Caco-2 (cell line): ENCODE measurements at regions of chr5 and their contacts with region 1.

Region 1: DNA sequence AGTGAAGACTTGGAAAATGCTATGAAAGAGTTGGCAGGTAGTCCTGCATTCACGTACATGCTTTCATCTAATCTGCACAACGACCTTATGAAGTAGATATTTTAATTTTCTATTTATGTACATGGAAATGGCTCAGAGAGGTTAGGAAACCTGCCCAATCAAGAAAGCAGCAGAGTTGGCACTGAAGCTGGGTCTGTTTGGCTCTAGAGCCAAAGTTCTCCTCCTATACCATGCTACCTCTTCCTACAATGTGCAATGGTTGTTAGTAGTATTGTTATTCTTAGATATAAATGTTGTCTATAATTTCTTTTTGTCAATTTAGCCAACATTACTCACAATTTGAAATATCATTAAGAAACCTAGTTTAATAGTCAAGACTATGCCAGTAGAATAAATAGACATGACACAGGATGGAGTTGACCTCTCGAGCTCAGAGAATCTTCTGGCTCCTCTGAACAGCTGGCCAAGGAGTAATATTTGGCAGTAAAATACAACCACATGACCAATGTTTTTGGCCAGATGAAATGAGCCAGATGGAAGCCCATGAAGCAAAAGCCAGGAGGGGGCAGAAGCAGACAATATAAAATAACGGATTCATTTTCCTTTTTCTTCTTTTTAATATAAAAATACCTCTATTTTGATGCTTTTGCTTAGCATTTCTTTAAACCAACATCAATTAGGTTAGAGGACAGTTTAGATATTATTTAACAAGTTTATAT is 542.3 kb downstream of the PDE4D start:
- DNase-seq: no peak
- H3K4me3 ChIP-seq: no peak overlapping the region
- H3K4me3 Mint-ChIP-seq: no peak overlapping the region
- H3K27ac Mint-ChIP-seq: no peak overlapping the region
- H3K4me1 ChIP-seq: peaks cover 17% of the 10 kb centered on the region
- H3K4me1 Mint-ChIP-seq: peaks cover 22% of the 10 kb centered on the region
- H3K27me3 ChIP-seq: no peaks in the 10 kb centered on the region
- H3K27me3 Mint-ChIP-seq: no peaks in the 10 kb centered on the region
- CTCF ChIP-seq: no peak

Region 2: DNA sequence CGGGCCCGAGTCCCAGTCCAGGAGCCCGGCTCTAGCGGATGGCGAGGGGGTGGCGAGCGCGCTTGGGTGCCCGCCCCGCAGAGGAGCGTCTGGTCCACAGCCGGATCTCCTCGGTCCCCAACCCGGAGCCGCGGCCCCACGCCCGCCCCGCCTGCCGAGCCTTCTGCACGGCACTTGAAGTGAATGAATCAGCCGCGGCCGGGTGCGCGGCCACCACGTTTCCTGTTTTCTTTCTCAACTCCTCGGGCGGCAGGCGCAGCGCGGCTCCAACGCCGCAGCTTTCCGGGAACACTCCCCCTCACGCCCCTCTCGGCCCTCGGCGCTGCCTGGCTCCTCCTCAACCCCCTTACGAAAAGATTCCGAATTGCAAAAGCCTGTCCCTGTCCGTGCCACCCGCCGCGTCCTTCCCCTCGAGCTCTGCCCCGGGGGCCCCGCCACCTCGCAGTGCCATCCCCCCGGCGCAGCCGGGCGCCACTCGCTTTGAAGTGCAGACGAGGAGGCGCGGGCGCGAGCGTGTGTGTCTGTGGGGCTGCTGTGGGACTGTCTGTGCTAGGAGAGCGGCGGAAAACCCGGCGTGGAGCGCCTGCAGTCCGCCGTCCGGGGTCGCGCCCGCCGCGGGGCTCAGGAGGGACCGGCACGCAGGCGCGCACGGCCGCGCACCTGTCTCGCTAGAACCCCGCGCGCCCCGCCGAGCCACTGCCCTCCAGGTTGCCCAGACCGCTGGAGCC is 311.8 kb before region 1 on chr5:
- CTCF ChIA-PET with region 1: no interaction called
- POLR2A ChIA-PET with region 1: no interaction called
- intact Hi-C with region 1: loop called (anchors 10 kb)
- DNase-seq: peak; percentile 78 to 80
- H3K4me3 ChIP-seq: peak overlapping the region; percentile 95
- H3K4me3 Mint-ChIP-seq: peak overlapping the region; percentile 69
- H3K27ac Mint-ChIP-seq: peak overlapping the region; percentile 10
- H3K4me1 ChIP-seq: peaks cover 39% of the 10 kb centered on the region
- H3K4me1 Mint-ChIP-seq: peaks cover 17% of the 10 kb centered on the region
- H3K27me3 ChIP-seq: no peaks in the 10 kb centered on the region
- H3K27me3 Mint-ChIP-seq: no peaks in the 10 kb centered on the region
- CTCF ChIP-seq: no peak

Region 3: GRCh38 chr5:59218424-59219045 is 132.7 kb before region 1 on chr5:
- CTCF ChIA-PET with region 1: interaction called, 19 read pairs
- POLR2A ChIA-PET with region 1: interaction called, 3 read pairs
- intact Hi-C with region 1: loop called (anchors 1 kb)
- DNase-seq: no peak
- H3K4me3 ChIP-seq: no peak overlapping the region
- H3K4me3 Mint-ChIP-seq: no peak overlapping the region
- H3K27ac Mint-ChIP-seq: no peak overlapping the region
- H3K4me1 ChIP-seq: no peaks in the 10 kb centered on the region; the same call in 1 of the 2 replicates
- H3K4me1 Mint-ChIP-seq: peaks cover 10% of the 10 kb centered on the region
- H3K27me3 ChIP-seq: no peaks in the 10 kb centered on the region
- H3K27me3 Mint-ChIP-seq: no peaks in the 10 kb centered on the region
- CTCF ChIP-seq: peak; percentile 5 to 52

Region 4: DNA sequence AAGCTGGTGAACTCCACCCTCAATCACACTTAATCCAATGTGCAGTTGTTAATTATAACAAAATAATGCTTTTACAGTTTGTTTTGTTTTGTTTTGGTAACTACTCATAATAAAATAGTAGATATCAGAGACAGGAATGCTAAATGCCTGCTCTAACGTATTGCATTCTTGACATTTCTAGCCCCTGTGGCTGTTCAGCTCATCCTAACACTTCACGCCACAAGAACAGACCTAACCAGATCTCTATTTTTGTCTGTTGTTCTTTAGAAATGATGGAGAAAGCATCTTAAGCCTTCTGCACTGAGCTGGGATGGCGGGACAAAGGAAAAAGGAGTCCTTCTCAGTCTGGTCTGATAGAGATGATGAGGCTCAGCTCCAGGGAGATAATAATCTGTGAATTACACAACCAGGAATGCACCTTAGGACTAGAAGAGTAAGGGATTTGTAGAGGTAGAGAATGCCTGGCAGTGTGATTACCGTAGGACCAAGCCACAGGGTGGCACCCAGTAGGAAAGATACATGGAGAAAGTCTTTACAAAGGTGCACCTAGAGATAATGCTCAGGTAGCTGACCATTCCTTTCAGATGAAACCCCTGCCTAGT is 86.5 kb before region 1 on chr5:
- CTCF ChIA-PET with region 1: interaction called, 13 read pairs
- POLR2A ChIA-PET with region 1: no interaction called
- intact Hi-C with region 1: loop called (anchors 5 kb)
- DNase-seq: peak in 1 of 2 experiments; percentile 34
- H3K4me3 ChIP-seq: no peak overlapping the region
- H3K4me3 Mint-ChIP-seq: no peak overlapping the region
- H3K27ac Mint-ChIP-seq: peak overlapping the region; percentile 81
- H3K4me1 ChIP-seq: peaks cover 37% of the 10 kb centered on the region
- H3K4me1 Mint-ChIP-seq: peaks cover 31% of the 10 kb centered on the region
- H3K27me3 ChIP-seq: no peaks in the 10 kb centered on the region
- H3K27me3 Mint-ChIP-seq: no peaks in the 10 kb centered on the region
- CTCF ChIP-seq: no peak

Region 5: DNA sequence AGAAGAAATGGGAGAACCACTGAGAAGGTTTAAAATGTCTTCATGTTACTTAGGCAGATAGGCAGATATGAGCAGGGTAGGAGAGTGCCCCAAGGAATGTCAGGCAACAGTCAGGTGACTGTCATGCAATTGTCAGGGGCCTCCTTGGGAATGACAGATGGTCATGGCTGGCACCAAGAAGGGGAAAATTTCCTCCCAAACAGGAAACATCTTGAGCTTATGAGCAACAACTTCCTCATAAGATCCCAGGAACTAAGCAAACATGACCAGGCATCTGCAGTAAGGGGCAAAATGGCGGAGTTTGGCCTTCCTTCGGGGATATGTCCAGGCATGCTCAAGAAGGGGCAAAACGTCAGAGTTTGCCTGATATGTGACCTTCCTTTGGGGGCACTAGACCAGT is 49.5 kb before region 1 on chr5:
- CTCF ChIA-PET with region 1: interaction called, 5 read pairs
- POLR2A ChIA-PET with region 1: no interaction called
- intact Hi-C with region 1: loop called (anchors 2 kb)
- DNase-seq: no peak
- H3K4me3 ChIP-seq: no peak overlapping the region
- H3K4me3 Mint-ChIP-seq: peak overlapping the region; percentile 1
- H3K27ac Mint-ChIP-seq: peak overlapping the region; percentile 9
- H3K4me1 ChIP-seq: peaks cover 42% of the 10 kb centered on the region
- H3K4me1 Mint-ChIP-seq: peaks cover 54% of the 10 kb centered on the region
- H3K27me3 ChIP-seq: no peaks in the 10 kb centered on the region
- H3K27me3 Mint-ChIP-seq: no peaks in the 10 kb centered on the region
- CTCF ChIP-seq: no peak

Region 6: GRCh38 chr5:59335544-59335943 is 15.7 kb before region 1 on chr5:
- CTCF ChIA-PET with region 1: interaction called, 9 read pairs
- POLR2A ChIA-PET with region 1: no interaction called
- intact Hi-C with region 1: loop called (anchors 1 kb)
- DNase-seq: peak in 1 of 2 experiments; percentile 14
- H3K4me3 ChIP-seq: no peak overlapping the region
- H3K4me3 Mint-ChIP-seq: no peak overlapping the region
- H3K27ac Mint-ChIP-seq: no peak overlapping the region
- H3K4me1 ChIP-seq: no peaks in the 10 kb centered on the region
- H3K4me1 Mint-ChIP-seq: no peaks in the 10 kb centered on the region
- H3K27me3 ChIP-seq: no peaks in the 10 kb centered on the region; the same call in 1 of the 2 replicates
- H3K27me3 Mint-ChIP-seq: no peaks in the 10 kb centered on the region
- CTCF ChIP-seq: peak in 1 of 2 experiments; percentile 34

Region 7: DNA sequence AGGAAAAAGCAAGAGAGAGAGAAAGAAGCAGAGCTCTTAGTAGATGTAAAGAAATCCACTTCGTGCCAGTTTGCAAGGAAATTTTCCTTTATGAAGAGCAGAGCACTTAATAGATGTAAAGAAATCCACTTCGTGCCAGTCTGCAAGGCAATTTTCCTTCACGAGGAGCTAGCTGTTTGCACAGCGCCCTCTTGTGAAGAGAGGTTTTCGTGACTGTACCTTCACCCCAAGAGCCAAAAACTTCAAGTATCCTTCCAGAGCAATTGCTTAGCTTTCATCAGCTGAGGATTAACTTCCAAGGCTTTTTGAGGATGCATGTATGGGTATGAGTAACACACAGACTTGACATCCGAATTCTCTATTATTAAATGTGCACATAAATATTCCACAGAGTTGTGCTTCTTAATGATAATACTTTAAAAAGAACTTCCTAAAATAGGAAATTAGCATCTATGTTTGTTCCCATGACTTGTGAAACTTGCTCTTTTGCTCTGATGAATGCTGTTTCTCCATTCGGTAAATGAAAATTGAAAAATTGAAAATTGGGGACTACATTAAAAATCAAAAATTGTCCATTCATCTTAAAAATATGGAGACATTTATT is 16.7 kb after region 1 on chr5:
- CTCF ChIA-PET with region 1: interaction called, 11 read pairs
- POLR2A ChIA-PET with region 1: no interaction called
- intact Hi-C with region 1: no loop called
- DNase-seq: peak; percentile 63
- H3K4me3 ChIP-seq: no peak overlapping the region
- H3K4me3 Mint-ChIP-seq: no peak overlapping the region
- H3K27ac Mint-ChIP-seq: no peak overlapping the region
- H3K4me1 ChIP-seq: no peaks in the 10 kb centered on the region
- H3K4me1 Mint-ChIP-seq: no peaks in the 10 kb centered on the region
- H3K27me3 ChIP-seq: no peaks in the 10 kb centered on the region
- H3K27me3 Mint-ChIP-seq: no peaks in the 10 kb centered on the region
- CTCF ChIP-seq: peak; percentile 67 to 87